AG04449 (cell line): ENCODE measurements at regions of chr15 and their contacts with region 1.

Region 1: GRCh38 chr15:51380999-51381795 is 39.7 kb downstream of the GLDN start:
- DNase-seq: no peak
- H3K4me3 ChIP-seq: no peak overlapping the region
- CTCF ChIP-seq: peak; percentile 91

Region 2: DNA sequence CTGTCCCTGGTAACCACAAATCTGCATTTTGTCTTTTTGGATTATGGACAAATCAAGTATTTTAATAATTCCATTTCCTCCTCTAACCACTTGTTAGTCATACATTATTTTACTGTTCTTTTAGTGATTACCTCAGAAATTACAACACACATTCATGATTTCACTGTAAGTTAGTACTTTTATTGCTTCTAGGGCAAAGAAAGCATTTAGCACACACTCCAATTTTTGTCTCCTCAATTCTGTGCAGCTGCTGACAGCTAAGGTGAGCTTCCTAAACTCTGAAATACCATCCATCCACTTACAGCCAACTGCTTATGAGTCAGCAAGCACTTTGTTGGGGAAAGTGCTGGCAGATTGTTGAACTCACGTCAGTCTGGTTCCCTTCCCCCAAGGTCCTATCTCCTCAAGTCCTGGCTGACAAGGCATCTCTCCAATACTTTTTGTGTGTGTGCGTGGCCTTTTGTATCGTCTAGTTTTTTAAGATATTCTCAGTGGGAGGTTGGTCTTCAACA is 237.1 kb before region 1 on chr15:
- CTCF ChIA-PET with region 1: interaction called, 10 read pairs
- POLR2A ChIA-PET with region 1: no interaction called
- DNase-seq: no peak
- H3K4me3 ChIP-seq: no peak overlapping the region
- CTCF ChIP-seq: no peak

Region 3: GRCh38 chr15:51227940-51228783 is 153.0 kb before region 1 on chr15:
- CTCF ChIA-PET with region 1: interaction called, 90 read pairs
- POLR2A ChIA-PET with region 1: no interaction called
- DNase-seq: peak; percentile 52
- H3K4me3 ChIP-seq: no peak overlapping the region
- CTCF ChIP-seq: no peak

Region 4: DNA sequence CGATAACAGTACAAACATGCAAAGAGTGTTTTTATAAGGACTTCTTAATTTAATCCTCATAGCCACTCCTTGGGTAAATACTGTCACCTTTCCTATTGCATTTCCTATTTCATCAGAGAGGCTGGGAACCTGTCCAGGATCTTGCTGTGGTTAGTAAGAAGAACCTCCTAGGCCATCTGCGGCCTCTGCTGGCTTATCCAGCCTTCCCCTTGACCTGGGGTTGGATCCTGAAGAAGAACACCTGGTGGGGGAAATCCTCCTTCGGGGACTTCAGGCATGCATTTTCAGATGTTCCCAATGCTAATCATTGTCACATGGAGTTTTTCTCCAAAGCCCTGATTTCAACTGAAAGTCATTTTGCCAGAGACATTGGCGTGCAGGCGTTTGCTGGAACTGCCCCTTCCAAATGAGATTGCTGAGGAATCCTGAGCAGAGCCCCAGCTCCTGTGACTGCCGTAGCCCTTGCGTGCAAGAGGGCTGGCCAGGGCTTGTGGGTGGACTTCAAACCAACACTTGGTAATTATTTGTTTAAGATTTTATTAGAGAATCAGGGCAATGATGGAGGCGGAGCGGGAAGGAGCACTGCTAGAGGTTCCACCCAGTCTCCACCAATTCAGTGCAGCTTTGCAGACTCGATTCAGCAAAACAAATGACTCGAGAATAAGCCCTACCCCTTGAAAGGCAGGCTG is 14.1 kb before region 1 on chr15:
- CTCF ChIA-PET with region 1: interaction called, 70 read pairs
- POLR2A ChIA-PET with region 1: no interaction called
- DNase-seq: no peak
- H3K4me3 ChIP-seq: no peak overlapping the region
- CTCF ChIP-seq: no peak